Dorsolateral prefrontal cortex (tissue), 120 donors: ENCODE measurements at regions of chr5 and their contacts with region 1.

Region 1: GRCh38 chr5:126182971-126183695 is 240.1 kb upstream of the GRAMD2B start:
- DNase-seq: peak; percentile 6 to 85 (median 76)
- H3K4me3 ChIP-seq: no peak overlapping the region
- H3K27ac ChIP-seq: peak overlapping the region in 18 of 59 donors; percentile 3 to 59 (median 32)
- H3K27me3 ChIP-seq: no peaks in the 10 kb centered on the region
- CTCF ChIP-seq: peak in 4 of 56 donors; percentile 11 to 39 (median 16)

Region 2: DNA sequence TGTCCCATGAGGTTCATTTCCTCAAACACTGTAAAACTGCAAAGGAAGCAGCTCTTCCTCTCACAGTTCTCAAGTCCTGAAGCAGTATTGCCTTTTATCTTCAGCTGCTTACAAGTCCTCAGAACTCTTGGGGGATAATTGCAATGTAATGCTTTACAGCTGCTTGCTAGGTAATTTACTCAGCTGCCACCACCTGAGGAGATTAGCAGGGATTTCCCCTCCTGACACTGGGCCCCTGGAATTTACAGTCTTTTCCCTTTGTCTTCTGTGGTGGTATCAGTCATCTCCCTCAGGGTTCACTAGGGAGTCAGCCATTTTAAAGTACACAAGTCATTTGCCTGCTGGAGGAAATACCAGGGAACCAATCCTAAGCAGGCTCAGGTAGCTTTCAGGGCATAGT is 514.2 kb before region 1 on chr5:
- intact Hi-C with region 1: no loop called
- DNase-seq: no peak
- H3K4me3 ChIP-seq: no peak overlapping the region
- H3K27ac ChIP-seq: no peak overlapping the region
- H3K27me3 ChIP-seq: no peaks in the 10 kb centered on the region
- CTCF ChIP-seq: no peak

Region 3: GRCh38 chr5:125719681-125720347 is 463.3 kb before region 1 on chr5:
- intact Hi-C with region 1: no loop called
- DNase-seq: peak in 1 of 10 donors; percentile 28
- H3K4me3 ChIP-seq: peak overlapping the region in 4 of 59 donors; percentile 3 to 25 (median 12)
- H3K27ac ChIP-seq: peak overlapping the region in 45 of 59 donors; percentile 12 to 85 (median 52)
- H3K27me3 ChIP-seq: no peaks in the 10 kb centered on the region
- CTCF ChIP-seq: peak in 1 of 56 donors; percentile 13

Region 4: GRCh38 chr5:126015235-126016181 is 167.6 kb before region 1 on chr5:
- intact Hi-C with region 1: loop called in 1 of 2 experiments (anchors 10 kb)
- DNase-seq: no peak
- H3K4me3 ChIP-seq: peak overlapping the region in 26 of 59 donors; percentile 0 to 58 (median 24)
- H3K27ac ChIP-seq: peak overlapping the region in 30 of 59 donors; percentile 8 to 77 (median 39)
- H3K27me3 ChIP-seq: no peaks in the 10 kb centered on the region
- CTCF ChIP-seq: no peak

Region 5: GRCh38 chr5:126166368-126166767 is 16.8 kb before region 1 on chr5:
- intact Hi-C with region 1: no loop called
- DNase-seq: no peak
- H3K4me3 ChIP-seq: no peak overlapping the region
- H3K27ac ChIP-seq: no peak overlapping the region
- H3K27me3 ChIP-seq: no peaks in the 10 kb centered on the region
- CTCF ChIP-seq: no peak

Region 6: DNA sequence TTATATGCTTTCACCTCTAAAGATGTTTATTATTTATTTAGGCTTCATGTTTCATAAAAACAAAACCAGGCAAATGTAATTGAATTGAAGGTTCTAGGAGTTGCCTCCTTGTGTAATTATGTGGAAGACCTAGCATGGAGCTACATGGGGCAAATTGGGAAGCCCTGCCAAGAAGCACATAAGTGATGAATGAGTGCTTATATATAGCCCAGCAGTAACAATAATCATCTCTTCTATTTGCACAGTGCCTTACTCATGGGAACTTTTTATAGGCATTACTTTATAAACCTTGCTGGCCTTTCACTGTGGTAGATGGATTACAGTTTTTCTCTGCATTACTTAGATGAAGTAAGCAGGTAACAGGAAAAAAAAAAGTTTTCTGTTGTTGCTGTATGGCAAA is 200.1 kb after region 1 on chr5:
- intact Hi-C with region 1: no loop called
- DNase-seq: no peak
- H3K4me3 ChIP-seq: no peak overlapping the region
- H3K27ac ChIP-seq: peak overlapping the region in 1 of 59 donors; percentile 66
- H3K27me3 ChIP-seq: no peaks in the 10 kb centered on the region
- CTCF ChIP-seq: no peak